ENCODE measurements at regions of chr21 and their contacts with region 1.

Region 1: DNA sequence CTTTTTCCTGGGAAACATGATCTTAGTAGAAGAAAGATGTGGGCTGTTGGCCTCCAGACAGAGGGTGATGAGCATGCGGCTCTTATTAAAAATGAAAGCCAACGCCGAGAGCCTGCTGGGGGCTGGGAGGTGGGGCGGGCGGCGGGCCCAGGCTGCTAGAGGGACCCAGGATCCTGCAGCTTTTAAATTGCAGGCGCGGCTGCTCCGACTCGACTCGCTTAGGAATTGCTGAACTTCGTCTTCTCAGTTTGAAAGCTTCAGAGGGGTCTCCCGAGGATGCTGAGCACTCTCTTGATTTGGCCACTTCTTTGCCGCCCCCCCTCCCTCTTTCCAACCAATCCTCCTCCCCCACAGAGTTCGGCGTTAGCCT is 1.2 kb downstream of the AGPAT3 start:
- DNase-seq: peak; percentile 76

Region 2: GRCh38 chr21:43816611-43817478 is 49.4 kb before region 1 on chr21:
- intact Hi-C with region 1: no loop called
- DNase-seq: no peak

Region 3: GRCh38 chr21:43902441-43902840 is 36.2 kb after region 1 on chr21:
- intact Hi-C with region 1: loop called (anchors 5 kb)
- DNase-seq: no peak

Region 4: GRCh38 chr21:43921979-43922945 is 56.0 kb after region 1 on chr21:
- intact Hi-C with region 1: loop called (anchors 5 kb)
- DNase-seq: no peak

Region 5: DNA sequence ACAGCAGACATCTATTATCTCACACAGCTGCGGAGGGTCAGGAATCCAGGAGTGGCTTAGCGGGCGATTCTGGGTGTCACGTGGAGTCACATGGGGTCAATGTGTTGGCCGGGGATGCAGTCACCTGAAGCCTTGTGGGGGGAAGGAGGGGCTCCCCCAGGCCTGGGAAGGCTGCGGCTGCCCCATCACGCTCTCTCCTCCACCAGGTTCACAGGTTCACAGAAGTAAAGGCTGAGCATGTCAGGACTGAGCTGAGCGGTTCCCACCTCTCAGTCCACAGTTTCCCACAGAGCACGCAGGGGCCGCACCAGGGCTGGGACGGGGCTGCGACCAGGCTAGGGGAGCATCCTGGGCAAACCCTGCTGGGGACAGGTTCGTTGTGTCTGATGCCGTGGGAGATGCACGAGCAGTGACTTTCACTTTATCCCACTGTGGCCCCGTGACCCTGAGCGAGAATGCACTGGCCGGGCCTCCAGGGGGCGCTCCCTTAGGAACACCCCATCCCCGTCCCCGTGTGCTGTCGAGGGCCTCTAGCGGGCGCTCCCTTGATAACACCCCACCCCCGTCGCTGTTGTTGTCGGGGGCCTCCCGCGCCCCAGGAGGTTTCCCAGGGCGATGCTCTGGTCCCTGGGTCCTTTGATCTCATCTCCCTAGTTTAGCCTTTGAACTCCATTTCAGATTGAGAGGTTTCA is 72.7 kb after region 1 on chr21:
- intact Hi-C with region 1: loop called (anchors 5 kb)
- DNase-seq: peak; percentile 91

Region 6: GRCh38 chr21:44089001-44089911 is 223.0 kb after region 1 on chr21:
- intact Hi-C with region 1: no loop called
- DNase-seq: peak; percentile 75